Psoas muscle (tissue), 8 donors: ENCODE measurements at regions of chr9 and their contacts with region 1.

Region 1: DNA sequence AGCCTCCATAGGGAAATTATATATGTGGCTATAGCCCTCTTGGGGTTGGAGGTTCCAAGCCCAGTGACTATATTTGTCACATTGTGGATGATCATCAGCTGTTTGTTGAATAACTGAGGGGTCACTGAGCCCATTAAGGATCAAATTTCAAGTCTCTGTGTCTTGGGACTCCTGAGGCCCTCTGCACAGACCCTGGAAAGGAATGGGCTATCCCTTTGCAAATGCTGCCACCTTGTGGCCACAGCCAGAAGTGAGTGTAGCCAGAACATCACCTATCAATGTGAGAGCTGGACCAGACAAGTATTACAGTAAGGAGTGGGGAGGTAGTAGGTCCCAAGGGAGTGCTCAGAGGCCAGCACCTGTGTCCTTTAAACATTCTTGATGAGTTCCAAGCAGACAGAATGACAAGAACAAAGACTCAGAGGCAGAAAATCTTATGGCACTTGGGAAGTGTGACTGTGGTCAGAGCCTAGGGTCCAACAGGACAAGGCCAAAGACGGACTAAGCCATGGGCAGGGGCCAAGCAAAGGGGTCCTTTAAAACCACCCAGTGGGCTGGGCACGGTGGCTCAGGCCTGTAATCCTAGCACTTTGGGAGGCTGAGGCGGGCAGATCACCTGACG is 8.2 kb downstream of the RPP25L start:
- DNase-seq: peak; percentile 82 to 92
- ATAC-seq: peak; percentile 91 to 96 (median 94)
- H3K4me3 ChIP-seq: no peak overlapping the region
- H3K27ac ChIP-seq: no peak overlapping the region
- H3K4me1 ChIP-seq: peaks cover 6% of the 10 kb centered on the region
- H3K27me3 ChIP-seq: no peaks in the 10 kb centered on the region
- CTCF ChIP-seq: peak; percentile 92

Region 2: GRCh38 chr9:34403554-34404380 is 200.0 kb before region 1 on chr9:
- intact Hi-C with region 1: loop called (anchors 5 to 10 kb)
- DNase-seq: peak; percentile 56 to 78
- ATAC-seq: peak; percentile 71 to 81 (median 75)
- H3K4me3 ChIP-seq: no peak overlapping the region
- H3K27ac ChIP-seq: no peak overlapping the region
- H3K4me1 ChIP-seq: no peaks in the 10 kb centered on the region
- H3K27me3 ChIP-seq: no peaks in the 10 kb centered on the region
- CTCF ChIP-seq: peak; percentile 98

Region 3: DNA sequence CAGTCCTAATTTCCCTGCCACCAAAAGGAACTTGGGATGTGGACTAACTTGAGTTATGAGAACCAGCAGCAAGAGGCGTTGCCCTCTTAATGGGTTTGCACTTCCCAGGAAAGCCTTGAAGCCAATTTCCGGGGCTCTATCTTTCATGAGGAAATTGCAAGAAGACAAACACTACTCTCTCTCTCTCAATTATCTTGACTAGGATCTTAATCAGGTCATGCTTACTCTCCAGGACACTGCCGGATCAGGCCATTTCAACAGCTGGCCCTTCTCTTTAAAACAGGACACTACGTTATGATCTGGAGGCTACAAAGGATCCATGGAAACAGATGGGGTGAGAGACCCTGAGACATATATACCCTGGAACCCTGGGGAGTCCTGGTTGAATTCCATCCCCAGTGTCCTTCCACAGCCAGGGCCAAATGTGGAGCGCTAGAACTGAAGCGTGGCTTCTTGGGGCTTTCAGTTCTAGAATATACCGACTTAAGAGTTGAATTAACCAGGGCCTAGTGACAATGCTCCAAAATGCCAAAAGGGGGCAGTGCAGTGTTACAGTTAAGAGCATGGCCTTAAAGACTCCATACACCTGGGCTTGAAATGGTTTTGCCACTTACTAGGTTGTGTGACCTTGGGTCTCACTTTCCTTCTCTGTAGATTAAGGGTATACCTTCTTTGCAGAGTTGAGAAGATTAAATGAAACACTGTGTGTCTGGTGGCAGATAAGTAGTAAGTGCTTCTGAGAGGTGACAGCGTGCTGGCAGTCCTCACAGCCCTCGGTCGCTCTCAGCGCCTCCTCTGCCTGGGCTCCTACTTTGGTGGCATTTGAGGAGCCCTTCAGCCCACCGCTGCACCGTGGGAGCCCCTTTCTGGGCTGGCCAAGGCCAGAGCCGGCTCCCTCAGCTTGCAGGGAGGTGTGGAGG is 166.5 kb before region 1 on chr9:
- intact Hi-C with region 1: loop called in 1 of 2 experiments (anchors 10 kb)
- DNase-seq: no peak
- ATAC-seq: peak; percentile 77 to 88 (median 84)
- H3K4me3 ChIP-seq: no peak overlapping the region
- H3K27ac ChIP-seq: no peak overlapping the region
- H3K4me1 ChIP-seq: peaks cover 27% of the 10 kb centered on the region
- H3K27me3 ChIP-seq: no peaks in the 10 kb centered on the region
- CTCF ChIP-seq: peak; percentile 72

Region 4: DNA sequence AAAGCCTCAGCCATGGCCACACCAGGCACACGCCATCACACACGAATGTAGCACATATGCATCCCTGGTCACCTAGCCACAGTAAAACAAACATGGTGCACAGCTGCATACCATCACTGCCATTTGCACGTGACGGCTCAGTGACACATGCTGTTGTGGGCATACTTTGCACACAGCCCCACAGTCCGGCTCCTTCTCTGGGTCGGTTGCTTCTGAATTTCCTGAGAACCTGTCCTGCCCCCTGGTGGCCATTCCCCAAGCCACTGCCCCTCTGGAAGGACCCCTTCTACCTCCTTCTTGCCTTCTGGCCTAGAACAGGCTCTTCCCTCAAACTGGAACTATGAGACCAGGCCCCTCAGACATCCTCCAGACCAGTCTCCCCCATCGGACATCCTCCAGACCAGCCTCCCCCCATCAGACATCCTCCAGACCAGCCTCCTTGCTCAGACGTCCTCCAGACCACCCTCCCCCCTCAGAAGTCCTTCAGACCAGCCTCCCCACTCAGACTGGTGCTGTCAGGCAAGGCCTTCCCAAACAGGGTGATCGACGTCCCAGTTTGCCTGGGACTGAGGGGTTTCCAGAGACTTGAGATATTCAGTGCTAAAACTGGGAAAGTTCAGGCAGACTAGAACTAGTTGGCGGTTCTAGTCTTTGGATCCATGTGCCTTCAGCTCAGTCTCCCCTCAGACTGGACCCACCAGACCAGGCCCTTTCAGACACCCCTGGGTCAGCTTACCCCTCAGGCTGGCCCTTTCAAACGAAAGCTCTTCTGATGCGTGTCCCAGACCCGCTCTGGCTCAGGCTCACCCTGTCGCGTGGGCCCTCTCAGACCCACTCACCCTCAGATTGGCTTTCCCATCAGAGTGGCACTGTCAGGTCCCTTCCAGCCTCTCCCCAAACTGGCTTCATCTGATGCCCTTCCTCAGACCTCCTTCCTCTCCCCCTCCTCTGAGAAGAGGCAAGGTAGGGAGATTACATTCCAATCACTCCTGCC is 56.6 kb before region 1 on chr9:
- intact Hi-C with region 1: loop called in 1 of 2 experiments (anchors 2 kb)
- DNase-seq: peak; percentile 63 to 80
- ATAC-seq: peak; percentile 54 to 66 (median 58)
- H3K4me3 ChIP-seq: no peak overlapping the region
- H3K27ac ChIP-seq: no peak overlapping the region
- H3K4me1 ChIP-seq: no peaks in the 10 kb centered on the region
- H3K27me3 ChIP-seq: peaks cover 0 to 4% (median 0%) of the 10 kb centered on the region in 3 donors
- CTCF ChIP-seq: peak; percentile 59